ENCODE measurements at regions of chr12 and their contacts with region 1.

Region 1: GRCh38 chr12:11085419-11085818 is 6.7 kb downstream of the TAS2R43 start:
- DNase-seq: no peak
- H3K4me3 Mint-ChIP-seq: no peak overlapping the region
- H3K27ac Mint-ChIP-seq: peak overlapping the region; percentile 63
- H3K4me1 Mint-ChIP-seq: peaks cover 5% of the 10 kb centered on the region
- H3K27me3 Mint-ChIP-seq: no peaks in the 10 kb centered on the region

Region 2: GRCh38 chr12:11108862-11109261 is 23.4 kb after region 1 on chr12:
- intact Hi-C with region 1: no loop called
- DNase-seq: no peak
- H3K4me3 Mint-ChIP-seq: no peak overlapping the region
- H3K27ac Mint-ChIP-seq: no peak overlapping the region
- H3K4me1 Mint-ChIP-seq: peaks cover 22% of the 10 kb centered on the region
- H3K27me3 Mint-ChIP-seq: no peaks in the 10 kb centered on the region

Region 3: DNA sequence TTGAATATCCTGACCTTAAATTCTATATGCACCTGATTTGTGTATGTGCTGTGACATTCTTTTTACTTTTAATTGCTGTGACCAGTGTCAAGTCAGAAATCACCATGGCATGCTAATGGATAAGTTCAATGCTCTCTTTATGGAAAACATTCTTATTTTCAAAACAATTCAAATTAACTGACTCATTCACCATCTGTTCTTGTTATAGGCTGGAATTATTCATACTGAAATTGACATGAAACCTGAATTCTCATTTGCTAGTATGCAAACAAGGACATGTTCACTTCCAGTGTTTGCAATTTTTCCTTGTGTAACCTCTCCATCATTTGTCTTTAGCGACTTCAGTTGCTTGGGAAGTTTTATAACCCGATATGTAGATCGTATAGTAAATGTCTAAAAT is 48.9 kb after region 1 on chr12 and contains the start of gene TAS2R30:
- intact Hi-C with region 1: loop called (anchors 2 kb)
- DNase-seq: no peak
- H3K4me3 Mint-ChIP-seq: no peak within 1 kb of the TSS
- H3K27ac Mint-ChIP-seq: peak within 1 kb of the TSS; percentile 35
- H3K4me1 Mint-ChIP-seq: peaks cover 20% of the 10 kb centered on the region
- H3K27me3 Mint-ChIP-seq: no peaks in the 10 kb centered on the region
- total RNA-seq, gene TAS2R30: 3.1 and 4.4 TPM in 2 replicates

Region 4: DNA sequence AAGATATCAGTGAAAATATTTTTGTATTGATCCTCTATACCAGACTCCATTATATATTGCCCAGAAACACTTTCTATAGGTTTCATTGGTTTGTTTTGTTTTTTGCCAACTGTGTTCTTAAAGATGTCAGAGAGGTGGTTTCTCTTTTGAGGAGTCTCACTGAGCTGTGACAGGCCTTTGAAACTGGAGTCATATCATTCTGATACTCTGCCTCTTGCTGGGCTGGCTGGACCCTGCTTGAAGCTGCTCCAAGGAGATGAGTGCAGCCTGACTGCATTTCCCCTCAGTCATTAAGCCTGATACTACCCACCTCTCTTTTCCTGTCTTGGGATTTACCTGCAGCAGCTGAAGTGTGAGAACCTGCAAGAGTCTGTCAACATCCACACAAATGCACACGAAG is 65.4 kb after region 1 on chr12:
- intact Hi-C with region 1: no loop called
- DNase-seq: no peak
- H3K4me3 Mint-ChIP-seq: no peak overlapping the region
- H3K27ac Mint-ChIP-seq: no peak overlapping the region
- H3K4me1 Mint-ChIP-seq: no peaks in the 10 kb centered on the region
- H3K27me3 Mint-ChIP-seq: no peaks in the 10 kb centered on the region